Heart right ventricle (tissue), 16 donors: ENCODE measurements at regions of chr14 and their contacts with region 1.

Region 1: GRCh38 chr14:104708606-104709268 is 15.3 kb upstream of the ADSS1 start:
- DNase-seq: peak; percentile 63 to 78
- ATAC-seq: peak; percentile 45 to 77 (median 72)
- H3K4me3 ChIP-seq: no peak overlapping the region
- H3K27ac ChIP-seq: peak overlapping the region in 1 of 10 donors; percentile 5
- H3K4me1 ChIP-seq: peaks cover 0 to 22% (median 4%) of the 10 kb centered on the region in 9 donors
- H3K27me3 ChIP-seq: no peaks in the 10 kb centered on the region
- CTCF ChIP-seq: peak; percentile 96 to 99 (median 98)

Region 2: GRCh38 chr14:103730490-103731035 is 978.2 kb before region 1 on chr14:
- intact Hi-C with region 1: no loop called
- DNase-seq: peak; percentile 69 to 80
- ATAC-seq: peak; percentile 78 to 89 (median 85)
- H3K4me3 ChIP-seq: no peak overlapping the region
- H3K27ac ChIP-seq: peak overlapping the region in 5 of 10 donors; percentile 9 to 51 (median 29)
- H3K4me1 ChIP-seq: peaks cover 4 to 70% (median 26%) of the 10 kb centered on the region in 9 donors
- H3K27me3 ChIP-seq: no peaks in the 10 kb centered on the region
- CTCF ChIP-seq: peak in 1 of 9 donors; percentile 11

Region 3: GRCh38 chr14:104604459-104605449 is 104.0 kb before region 1 on chr14 and contains the start of gene TMEM179:
- intact Hi-C with region 1: no loop called
- DNase-seq: no peak
- ATAC-seq: peak; percentile 51 to 87 (median 76)
- H3K4me3 ChIP-seq: peak within 1 kb of the TSS in 5 of 10 donors; percentile 14 to 30 (median 25)
- H3K27ac ChIP-seq: no peak within 1 kb of the TSS
- H3K4me1 ChIP-seq: peaks cover 0 to 7% (median 4%) of the 10 kb centered on the region in 9 donors
- H3K27me3 ChIP-seq: peaks cover 0 to 80% (median 71%) of the 10 kb centered on the region in 7 donors
- CTCF ChIP-seq: no peak
- total RNA-seq, gene TMEM179: 0.34 to 1.0 (median 0.42) TPM in 5 of 10 donors, not detected in the others

Region 4: GRCh38 chr14:104650057-104650981 is 58.4 kb before region 1 on chr14:
- intact Hi-C with region 1: loop called (anchors 1 to 5 kb)
- DNase-seq: peak; percentile 62 to 76
- ATAC-seq: peak; percentile 78 to 90 (median 86)
- H3K4me3 ChIP-seq: peak overlapping the region; percentile 26 to 57 (median 48)
- H3K27ac ChIP-seq: peak overlapping the region in 1 of 10 donors; percentile 39
- H3K4me1 ChIP-seq: peaks cover 0 to 22% (median 11%) of the 10 kb centered on the region in 9 donors
- H3K27me3 ChIP-seq: no peaks in the 10 kb centered on the region
- CTCF ChIP-seq: peak; percentile 96 to 99 (median 98)

Region 5: DNA sequence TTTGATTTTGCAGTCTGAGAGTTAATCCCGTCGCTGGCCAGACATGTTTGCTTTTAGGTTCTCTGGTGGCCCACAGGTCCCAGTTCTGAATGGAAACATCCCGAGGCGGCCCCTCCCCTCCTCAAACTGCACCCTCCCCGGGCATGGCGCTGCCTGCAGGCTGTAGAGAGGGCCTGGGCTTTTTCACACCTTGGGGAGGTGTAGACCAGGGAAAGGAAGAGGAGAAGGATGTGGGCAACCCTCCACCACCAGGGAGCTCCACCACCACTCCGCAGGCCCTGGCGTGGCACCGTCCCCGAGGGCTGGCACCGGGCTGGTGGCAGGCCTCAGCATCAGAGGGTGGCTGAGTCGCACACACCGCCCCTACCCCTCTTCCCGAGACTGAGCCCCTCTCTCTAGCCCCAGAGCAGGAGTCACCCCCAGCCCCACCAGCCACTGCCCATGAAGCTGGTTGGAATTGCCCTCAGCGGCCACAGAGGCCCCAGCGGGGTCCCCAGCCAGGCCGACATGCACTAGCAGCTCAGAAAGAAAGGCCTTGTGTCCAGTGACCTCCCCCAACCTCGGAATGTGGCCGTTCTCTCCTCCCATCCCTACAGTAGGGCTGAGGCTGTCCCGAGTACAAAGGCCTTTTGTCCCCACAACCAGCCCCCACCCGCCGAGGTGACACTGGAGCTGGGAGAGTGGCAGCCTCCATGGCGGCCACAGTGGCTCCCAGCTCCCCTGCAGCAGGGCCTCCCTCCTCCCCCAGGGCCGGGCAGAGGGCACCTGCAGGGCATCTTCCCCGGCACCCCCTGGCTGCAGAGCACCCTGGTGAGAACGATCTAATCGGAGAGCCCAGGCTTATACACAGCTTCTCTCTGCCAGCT is 42.8 kb before region 1 on chr14:
- intact Hi-C with region 1: loop called in 1 of 10 experiments (anchors 2 kb)
- DNase-seq: no peak
- ATAC-seq: peak; percentile 70 to 89 (median 78)
- H3K4me3 ChIP-seq: no peak overlapping the region
- H3K27ac ChIP-seq: no peak overlapping the region
- H3K4me1 ChIP-seq: peaks cover 0 to 14% (median 8%) of the 10 kb centered on the region in 9 donors
- H3K27me3 ChIP-seq: peaks cover 0 to 4% (median 0%) of the 10 kb centered on the region in 7 donors
- CTCF ChIP-seq: peak in 8 of 9 donors; percentile 20 to 50 (median 43)

Region 6: GRCh38 chr14:104723648-104724406 is 15.1 kb after region 1 on chr14 and contains the start of gene ADSS1:
- intact Hi-C with region 1: no loop called
- DNase-seq: peak; percentile 81 to 83
- ATAC-seq: peak; percentile 40 to 73 (median 54)
- H3K4me3 ChIP-seq: peak within 1 kb of the TSS; percentile 34 to 84 (median 73)
- H3K27ac ChIP-seq: peak within 1 kb of the TSS; percentile 85 to 98 (median 90)
- H3K4me1 ChIP-seq: peaks cover 23 to 80% (median 47%) of the 10 kb centered on the region in 9 donors
- H3K27me3 ChIP-seq: no peaks in the 10 kb centered on the region
- CTCF ChIP-seq: peak; percentile 83 to 98 (median 92)
- total RNA-seq, gene ADSS1: 159 to 295 (median 195) TPM